ENCODE measurements at regions of chr6 and their contacts with region 1.

Region 1: DNA sequence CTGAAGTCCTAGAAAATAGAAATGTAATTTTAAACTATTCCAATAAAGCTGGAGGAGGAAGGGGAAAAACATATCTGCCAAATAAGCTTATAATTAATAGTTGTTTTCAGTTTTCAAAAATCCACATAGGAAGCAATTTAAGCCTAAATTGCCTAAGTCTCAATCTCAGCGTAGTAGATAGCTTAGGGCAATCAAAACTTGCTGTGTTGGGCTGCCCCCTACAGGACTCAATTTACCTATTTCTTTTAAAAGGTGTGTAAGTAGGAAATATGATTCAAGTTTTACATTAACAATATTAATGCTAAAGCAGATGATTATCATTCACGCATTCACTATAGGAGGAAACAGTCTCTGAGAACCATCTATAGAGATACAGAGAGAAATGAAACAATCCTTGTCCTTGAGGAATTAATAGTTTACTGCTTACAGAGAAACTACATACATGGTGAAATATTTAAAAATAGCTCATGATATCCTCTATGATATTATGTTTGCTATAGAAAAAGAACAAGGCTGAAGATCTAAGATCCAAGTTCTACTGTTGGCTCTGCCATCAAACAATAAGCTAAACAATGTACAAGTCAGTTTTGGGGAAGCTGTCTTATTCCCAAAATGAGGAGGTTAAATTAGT is 102.1 kb downstream of the ATG5 start:
- DNase-seq: peak; percentile 58
- H3K4me3 ChIP-seq: no peak overlapping the region
- H3K27ac ChIP-seq: no peak overlapping the region
- H3K4me1 ChIP-seq: no peaks in the 10 kb centered on the region
- H3K27me3 ChIP-seq: no peaks in the 10 kb centered on the region
- CTCF ChIP-seq: peak; percentile 53 to 61

Region 2: GRCh38 chr6:105431226-105431625 is 792.2 kb before region 1 on chr6:
- CTCF ChIA-PET with region 1: no interaction called
- dilution Hi-C with region 1: no loop called
- in situ Hi-C with region 1: loop called in 1 of 2 experiments (anchors 25 kb)
- intact Hi-C with region 1: loop called (anchors 1 kb)
- DNase-seq: peak; percentile 46
- H3K4me3 ChIP-seq: no peak overlapping the region
- H3K27ac ChIP-seq: no peak overlapping the region
- H3K4me1 ChIP-seq: peaks cover 35% of the 10 kb centered on the region
- H3K27me3 ChIP-seq: no peaks in the 10 kb centered on the region
- CTCF ChIP-seq: peak; percentile 57

Region 3: DNA sequence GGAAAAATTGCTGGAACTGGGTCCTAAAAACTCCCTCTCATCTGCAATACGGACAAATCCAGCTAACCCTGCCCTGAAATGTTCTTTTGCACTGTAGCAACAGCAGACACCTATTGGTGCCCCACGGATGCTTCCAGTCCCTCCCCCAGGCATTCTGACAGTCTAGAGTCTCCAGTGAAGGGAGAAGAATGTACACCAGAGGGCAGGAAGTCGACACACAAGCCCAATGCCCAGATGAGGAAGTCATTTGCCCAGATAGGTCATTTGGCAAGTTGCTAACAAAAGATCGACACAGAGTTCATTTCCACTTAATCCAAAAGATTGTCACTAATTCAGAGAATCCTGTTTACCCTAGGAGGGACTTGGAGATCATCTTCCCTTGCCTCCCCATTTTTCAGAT is 430.3 kb before region 1 on chr6:
- CTCF ChIA-PET with region 1: no interaction called
- dilution Hi-C with region 1: no loop called
- in situ Hi-C with region 1: no loop called
- intact Hi-C with region 1: loop called (anchors 1 kb)
- DNase-seq: no peak
- H3K4me3 ChIP-seq: no peak overlapping the region
- H3K27ac ChIP-seq: no peak overlapping the region
- H3K4me1 ChIP-seq: no peaks in the 10 kb centered on the region
- H3K27me3 ChIP-seq: no peaks in the 10 kb centered on the region
- CTCF ChIP-seq: peak in 1 of 2 donors; percentile 18

Region 4: GRCh38 chr6:105992315-105992961 is 231.0 kb before region 1 on chr6:
- CTCF ChIA-PET with region 1: interaction called, 4 read pairs
- dilution Hi-C with region 1: no loop called
- in situ Hi-C with region 1: no loop called
- intact Hi-C with region 1: loop called (anchors 5 kb)
- DNase-seq: peak; percentile 67
- H3K4me3 ChIP-seq: peak overlapping the region; percentile 61 to 76 (median 62)
- H3K27ac ChIP-seq: peak overlapping the region; percentile 67
- H3K4me1 ChIP-seq: peaks cover 25% of the 10 kb centered on the region
- H3K27me3 ChIP-seq: no peaks in the 10 kb centered on the region
- CTCF ChIP-seq: no peak